OCI-LY7 (cell line): ENCODE measurements at regions of chr2 and their contacts with region 1.

Region 1: GRCh38 chr2:230202430-230203109 is 17.2 kb downstream of the SP110 start:
- DNase-seq: peak; percentile 74
- H3K4me3 ChIP-seq: no peak overlapping the region
- H3K27ac ChIP-seq: no peak overlapping the region
- H3K4me1 ChIP-seq: peaks cover 47% of the 10 kb centered on the region
- CTCF ChIP-seq: peak; percentile 84

Region 2: GRCh38 chr2:229519655-229520430 is 682.7 kb before region 1 on chr2:
- CTCF ChIA-PET with region 1: no interaction called
- POLR2A ChIA-PET with region 1: no interaction called
- intact Hi-C with region 1: no loop called
- DNase-seq: peak; percentile 14
- H3K4me3 ChIP-seq: no peak overlapping the region
- H3K27ac ChIP-seq: no peak overlapping the region
- H3K4me1 ChIP-seq: no peaks in the 10 kb centered on the region
- CTCF ChIP-seq: no peak

Region 3: DNA sequence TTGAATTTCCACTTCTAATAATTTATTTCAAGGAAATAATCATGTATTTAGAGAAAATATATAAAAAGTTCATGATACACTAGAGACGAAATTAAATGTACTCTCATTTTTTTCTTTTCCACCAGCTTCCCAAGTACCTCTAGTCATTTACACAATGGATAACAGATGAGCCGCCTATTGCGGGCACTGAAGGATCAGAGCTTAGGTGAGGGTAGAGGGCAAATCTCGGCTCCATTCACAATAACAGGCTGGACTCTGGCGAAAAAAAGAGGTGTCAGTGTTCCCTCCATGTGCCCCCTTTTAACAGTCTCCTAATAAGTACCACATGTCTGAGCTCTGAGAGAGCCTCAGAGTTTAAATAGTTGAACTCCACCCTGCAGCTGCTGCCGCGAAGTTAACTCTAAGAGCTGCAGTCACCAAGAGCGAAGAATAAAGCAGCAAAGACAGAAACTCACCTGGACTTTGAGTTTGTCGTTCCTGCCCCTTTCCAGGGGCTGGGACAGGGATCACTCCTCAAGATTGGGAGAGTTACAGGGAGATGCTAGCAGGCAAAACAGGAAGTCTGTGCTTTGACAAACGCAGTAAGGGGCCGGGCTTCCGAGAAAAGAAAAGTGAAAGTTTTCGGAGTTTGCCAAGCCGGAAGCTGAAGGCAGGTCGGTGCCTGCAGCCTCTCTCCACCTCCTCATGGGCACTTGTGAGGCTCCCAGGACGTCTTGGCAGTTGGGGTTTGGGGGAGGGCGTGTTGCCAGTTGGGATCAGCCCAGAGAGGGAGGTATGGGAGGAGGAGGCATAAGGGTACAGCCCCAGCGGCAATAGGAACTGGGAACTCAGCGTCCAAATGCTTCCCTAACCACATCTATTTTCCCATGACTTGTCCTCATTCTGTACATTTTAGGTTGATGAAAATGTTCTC is 17.1 kb after region 1 on chr2 and contains the start of gene SP110:
- CTCF ChIA-PET with region 1: no interaction called
- POLR2A ChIA-PET with region 1: interaction called, 41 read pairs
- intact Hi-C with region 1: no loop called
- DNase-seq: peak; percentile 85
- H3K4me3 ChIP-seq: peak within 1 kb of the TSS; percentile 74
- H3K27ac ChIP-seq: peak within 1 kb of the TSS; percentile 36
- H3K4me1 ChIP-seq: peaks cover 60% of the 10 kb centered on the region
- CTCF ChIP-seq: no peak
- total RNA-seq, gene SP110: 15.7 and 15.8 TPM in 2 replicates

Region 4: GRCh38 chr2:230319211-230319862 is 116.8 kb after region 1 on chr2:
- CTCF ChIA-PET with region 1: no interaction called
- POLR2A ChIA-PET with region 1: interaction called, 5 read pairs
- intact Hi-C with region 1: loop called (anchors 5 kb)
- DNase-seq: peak; percentile 92
- H3K4me3 ChIP-seq: peak overlapping the region; percentile 40
- H3K27ac ChIP-seq: peak overlapping the region; percentile 76
- H3K4me1 ChIP-seq: peaks cover 25% of the 10 kb centered on the region
- CTCF ChIP-seq: no peak

Region 5: DNA sequence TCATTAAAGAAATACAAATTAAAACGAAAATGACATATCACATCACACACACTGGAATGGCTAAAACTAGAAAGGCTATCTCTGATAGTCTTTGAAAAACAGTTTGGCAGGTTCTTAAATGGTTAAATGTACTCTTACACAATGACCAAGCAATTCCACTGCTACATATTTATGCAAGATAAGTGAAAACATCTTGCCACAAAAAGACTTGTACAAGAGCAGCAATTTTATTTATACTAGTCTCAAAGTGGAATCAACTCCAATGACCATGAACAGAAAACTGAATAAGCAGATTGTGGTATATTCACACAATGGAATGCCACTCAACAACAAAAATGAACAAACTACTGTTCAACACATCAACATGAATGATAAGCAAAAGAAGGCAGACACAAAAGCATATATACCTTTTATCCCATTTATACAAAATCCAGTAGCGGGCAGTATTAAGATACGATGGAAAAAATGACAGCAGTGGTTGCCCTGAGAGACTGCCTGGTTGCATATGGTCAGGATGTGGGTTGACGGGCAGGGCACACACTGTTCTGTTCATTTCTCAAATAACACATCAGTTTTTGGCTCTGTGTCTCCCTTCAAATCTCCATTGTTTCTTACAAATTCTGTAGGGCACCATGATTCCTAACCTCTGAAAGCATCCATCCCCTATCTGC is 238.8 kb after region 1 on chr2:
- CTCF ChIA-PET with region 1: no interaction called
- POLR2A ChIA-PET with region 1: no interaction called
- intact Hi-C with region 1: loop called (anchors 10 kb)
- DNase-seq: peak; percentile 15
- H3K4me3 ChIP-seq: no peak overlapping the region
- H3K27ac ChIP-seq: no peak overlapping the region
- H3K4me1 ChIP-seq: peaks cover 13% of the 10 kb centered on the region
- CTCF ChIP-seq: no peak

Region 6: GRCh38 chr2:230602562-230603230 is 400.1 kb after region 1 on chr2:
- CTCF ChIA-PET with region 1: no interaction called
- POLR2A ChIA-PET with region 1: interaction called, 3 read pairs
- intact Hi-C with region 1: loop called (anchors 2 kb)
- DNase-seq: peak; percentile 94
- H3K4me3 ChIP-seq: peak overlapping the region; percentile 48
- H3K27ac ChIP-seq: peak overlapping the region; percentile 79
- H3K4me1 ChIP-seq: peaks cover 66% of the 10 kb centered on the region
- CTCF ChIP-seq: no peak

Region 7: DNA sequence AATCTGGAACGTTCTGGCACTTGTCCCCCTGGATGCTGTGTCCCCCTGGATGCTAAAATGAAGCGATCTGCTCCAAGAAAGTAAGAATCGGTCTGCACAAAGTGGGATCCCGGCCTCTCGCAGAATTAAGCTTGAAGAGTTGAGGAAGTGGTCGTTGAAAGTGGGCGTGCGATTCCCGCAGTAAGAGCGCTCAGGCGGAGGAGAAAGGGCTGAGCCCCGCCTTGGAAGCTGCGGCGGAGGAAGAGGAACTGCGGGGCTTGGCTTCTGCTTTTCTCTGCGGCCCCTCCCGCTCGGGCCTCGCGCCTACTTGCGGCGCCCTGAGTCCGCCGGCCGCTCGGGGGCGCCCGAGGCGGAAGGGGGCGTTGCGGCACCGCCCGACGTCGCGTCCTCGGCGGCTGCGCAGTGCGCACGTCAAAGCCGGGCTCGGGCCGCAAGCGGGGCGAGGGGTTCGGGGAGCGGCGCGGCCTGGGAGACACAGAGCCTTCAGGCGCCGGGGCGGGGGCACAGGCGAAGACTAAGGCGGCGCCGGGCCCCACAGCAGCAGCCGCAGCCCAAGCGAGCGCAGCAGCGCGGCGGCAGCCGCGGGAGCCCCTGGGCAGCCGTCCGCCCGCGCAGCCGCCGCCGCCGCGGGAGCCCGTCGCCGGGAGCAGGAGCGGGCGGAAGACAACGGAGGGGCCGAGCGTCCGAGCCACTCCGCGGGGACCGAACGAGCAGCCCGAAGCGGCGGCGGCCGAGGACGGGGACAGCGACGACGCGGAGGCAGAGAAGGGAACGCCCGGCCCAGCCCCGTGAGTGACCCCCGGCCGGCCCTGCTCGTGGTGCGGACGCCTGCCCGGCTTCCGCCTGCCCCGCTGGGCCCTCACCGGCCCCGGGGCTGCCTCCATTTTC is 510.1 kb after region 1 on chr2 and contains the start of gene CAB39:
- CTCF ChIA-PET with region 1: no interaction called
- POLR2A ChIA-PET with region 1: interaction called, 4 read pairs
- intact Hi-C with region 1: loop called (anchors 5 kb)
- DNase-seq: peak; percentile 94
- H3K4me3 ChIP-seq: peak within 1 kb of the TSS; percentile 89
- H3K27ac ChIP-seq: peak within 1 kb of the TSS; percentile 60
- H3K4me1 ChIP-seq: peaks cover 43% of the 10 kb centered on the region
- CTCF ChIP-seq: peak; percentile 80
- total RNA-seq, gene CAB39: 31.5 and 39.3 TPM in 2 replicates